Posterior vena cava (tissue), 2 donors: ENCODE measurements at regions of chr18 and their contacts with region 1.

Region 1: GRCh38 chr18:6948281-6949055 is 169.1 kb downstream of the LAMA1 start:
- DNase-seq: no peak

Region 2: GRCh38 chr18:6938003-6938402 is 10.5 kb before region 1 on chr18:
- intact Hi-C with region 1: no loop called
- DNase-seq: no peak

Region 3: DNA sequence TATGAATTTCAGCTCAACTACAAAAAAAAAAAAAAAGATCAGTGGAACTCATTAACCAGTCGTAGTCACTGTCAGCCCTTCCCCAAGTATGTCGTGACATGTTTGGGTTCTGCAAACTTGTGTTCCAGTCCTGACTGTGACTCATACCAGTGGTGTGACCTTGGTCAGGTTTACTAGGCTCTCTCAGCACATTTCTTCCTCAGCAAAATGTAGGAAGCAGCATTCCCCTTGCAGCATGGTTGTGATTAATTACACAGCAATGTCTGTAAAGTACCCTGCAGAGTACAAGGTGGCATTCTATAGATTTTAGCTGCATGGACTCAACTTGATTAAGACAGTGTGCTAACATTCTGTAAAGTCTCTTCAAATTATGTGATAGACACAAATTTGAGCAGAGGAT is 12.2 kb after region 1 on chr18:
- intact Hi-C with region 1: loop called in 1 of 2 experiments (anchors 1 kb)
- DNase-seq: no peak

Region 4: DNA sequence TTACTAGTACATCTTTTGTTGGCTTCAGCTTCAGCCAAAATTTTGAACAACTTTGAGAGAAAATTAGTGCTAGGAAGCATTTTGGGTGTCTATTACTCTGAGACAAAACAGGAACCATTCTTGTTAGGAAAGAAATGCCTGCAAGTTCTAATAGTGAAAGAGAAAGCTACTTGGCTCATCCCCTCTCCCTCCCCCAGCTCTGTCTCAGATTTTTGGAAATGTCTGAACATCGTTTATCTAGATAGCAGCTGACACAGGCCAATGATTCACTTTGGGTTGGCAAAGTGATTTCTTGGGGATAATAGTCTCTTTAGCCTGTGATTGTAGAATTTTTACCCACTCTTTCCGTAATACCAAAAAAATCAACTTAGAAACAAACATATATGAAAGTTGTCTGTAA is 576.3 kb after region 1 on chr18:
- intact Hi-C with region 1: loop called in 1 of 2 experiments (anchors 5 kb)
- DNase-seq: no peak